H1 (cell line): ENCODE measurements at regions of chr2 and their contacts with region 1.

Region 1: DNA sequence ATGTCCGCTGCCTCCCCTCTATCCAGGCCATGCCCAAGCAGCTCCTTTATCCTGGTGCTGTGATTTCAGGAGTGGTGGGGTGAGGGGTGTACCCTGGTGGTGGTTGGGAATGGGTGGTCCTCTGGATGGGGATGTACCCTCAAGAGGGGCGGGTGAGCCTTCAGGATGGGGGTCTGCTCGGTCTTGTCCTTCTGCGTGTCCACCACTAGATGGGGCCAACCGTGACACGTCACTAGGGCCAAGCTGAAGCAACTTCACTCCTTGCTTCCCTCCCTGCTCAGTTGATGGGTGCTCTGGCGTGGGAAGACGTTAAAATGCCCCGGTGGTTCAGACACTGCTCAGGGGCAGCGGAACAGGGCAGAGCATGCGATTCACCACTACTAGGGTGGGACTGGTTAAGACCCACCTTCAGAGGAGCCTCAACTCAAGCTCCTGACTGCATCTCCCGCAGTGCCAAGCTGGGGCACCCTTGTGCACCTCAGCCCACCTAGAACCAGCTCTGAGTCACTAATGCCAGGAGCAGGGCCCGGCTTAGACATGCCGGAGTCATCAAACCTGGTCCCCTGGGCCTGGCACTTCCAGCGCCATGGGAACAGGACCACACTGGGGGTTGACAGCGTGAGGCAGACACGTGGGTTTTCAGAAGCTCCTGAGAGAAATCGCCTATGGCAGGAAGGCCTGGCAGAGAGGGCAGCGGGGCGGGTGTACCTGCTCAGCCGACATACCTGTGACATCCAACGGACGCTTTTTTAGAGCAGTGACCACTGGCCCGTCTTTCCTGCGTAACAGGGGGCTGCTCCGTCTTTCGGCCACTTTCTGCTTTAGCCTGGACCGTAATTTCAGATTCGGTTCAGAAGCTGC is 256.7 kb downstream of the HDAC4 start:
- DNase-seq: peak in 1 of 2 experiments; percentile 72
- H3K4me3 ChIP-seq: no peak overlapping the region
- H3K27ac ChIP-seq: no peak overlapping the region
- H3K4me1 ChIP-seq: no peaks in the 10 kb centered on the region
- H3K27me3 ChIP-seq: no peaks in the 10 kb centered on the region
- CTCF ChIP-seq: peak in 2 of 3 experiments; percentile 59 to 90; a peak in 3 of 4 replicates
- EP300 ChIP-seq: no peak
- POLR2A ChIP-seq: no peak
- RAD21 ChIP-seq: peak; percentile 61 to 64

Region 2: GRCh38 chr2:239015218-239015900 is 128.7 kb before region 1 on chr2:
- CTCF ChIA-PET with region 1: no interaction called
- POLR2A ChIA-PET with region 1: no interaction called
- DNase-seq: no peak
- H3K4me3 ChIP-seq: no peak overlapping the region
- H3K27ac ChIP-seq: no peak overlapping the region
- H3K4me1 ChIP-seq: no peaks in the 10 kb centered on the region
- H3K27me3 ChIP-seq: no peaks in the 10 kb centered on the region
- CTCF ChIP-seq: no peak
- EP300 ChIP-seq: no peak
- POLR2A ChIP-seq: no peak
- RAD21 ChIP-seq: no peak

Region 3: DNA sequence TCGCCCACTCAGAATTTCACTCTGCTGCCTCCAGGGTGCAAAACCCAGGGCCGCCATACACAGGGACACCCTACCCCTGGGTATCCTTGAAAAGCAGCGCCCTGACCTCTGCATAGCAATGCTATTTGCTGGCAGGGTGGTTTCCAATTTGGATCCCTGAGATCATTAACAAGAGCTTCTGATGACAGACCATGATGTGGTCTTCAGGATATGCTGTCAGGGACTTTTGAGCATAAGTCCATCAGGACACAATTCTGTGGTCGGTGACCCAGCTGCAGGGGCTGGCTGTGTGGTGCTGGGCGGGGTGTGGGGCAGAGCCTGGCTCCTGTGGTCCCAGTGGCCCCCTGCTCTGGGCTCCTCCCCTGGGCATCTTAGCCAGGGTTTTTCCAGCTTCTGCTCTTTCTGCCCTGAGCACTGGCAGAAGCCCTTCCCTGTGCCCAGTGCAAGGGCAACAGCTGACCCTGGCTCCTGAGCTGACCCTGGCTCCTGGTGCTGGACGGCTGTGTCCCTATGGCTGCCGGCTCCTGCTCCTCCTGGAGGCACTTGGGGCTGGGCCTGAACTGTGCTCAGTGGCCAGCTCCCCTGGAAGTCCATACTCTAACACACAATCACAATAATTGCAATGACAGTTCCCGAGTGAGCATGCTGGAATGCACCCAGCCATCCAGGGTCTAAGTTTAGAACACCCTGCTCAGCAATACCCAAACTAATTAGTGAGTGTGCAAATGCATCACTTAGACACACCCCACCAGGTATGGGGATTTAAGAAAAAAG is 14.8 kb before region 1 on chr2:
- CTCF ChIA-PET with region 1: interaction called, 30 read pairs
- POLR2A ChIA-PET with region 1: interaction called, 4 read pairs
- DNase-seq: no peak
- H3K4me3 ChIP-seq: no peak overlapping the region
- H3K27ac ChIP-seq: no peak overlapping the region
- H3K4me1 ChIP-seq: no peaks in the 10 kb centered on the region
- H3K27me3 ChIP-seq: no peaks in the 10 kb centered on the region
- CTCF ChIP-seq: no peak
- EP300 ChIP-seq: no peak
- POLR2A ChIP-seq: no peak
- RAD21 ChIP-seq: no peak

Region 4: GRCh38 chr2:239157771-239158170 is 13.7 kb after region 1 on chr2:
- CTCF ChIA-PET with region 1: interaction called, 28 read pairs
- POLR2A ChIA-PET with region 1: interaction called, 3 read pairs
- DNase-seq: peak in 1 of 2 experiments; percentile 82
- H3K4me3 ChIP-seq: no peak overlapping the region
- H3K27ac ChIP-seq: no peak overlapping the region
- H3K4me1 ChIP-seq: no peaks in the 10 kb centered on the region
- H3K27me3 ChIP-seq: no peaks in the 10 kb centered on the region
- CTCF ChIP-seq: no peak
- EP300 ChIP-seq: no peak
- POLR2A ChIP-seq: no peak
- RAD21 ChIP-seq: no peak

Region 5: DNA sequence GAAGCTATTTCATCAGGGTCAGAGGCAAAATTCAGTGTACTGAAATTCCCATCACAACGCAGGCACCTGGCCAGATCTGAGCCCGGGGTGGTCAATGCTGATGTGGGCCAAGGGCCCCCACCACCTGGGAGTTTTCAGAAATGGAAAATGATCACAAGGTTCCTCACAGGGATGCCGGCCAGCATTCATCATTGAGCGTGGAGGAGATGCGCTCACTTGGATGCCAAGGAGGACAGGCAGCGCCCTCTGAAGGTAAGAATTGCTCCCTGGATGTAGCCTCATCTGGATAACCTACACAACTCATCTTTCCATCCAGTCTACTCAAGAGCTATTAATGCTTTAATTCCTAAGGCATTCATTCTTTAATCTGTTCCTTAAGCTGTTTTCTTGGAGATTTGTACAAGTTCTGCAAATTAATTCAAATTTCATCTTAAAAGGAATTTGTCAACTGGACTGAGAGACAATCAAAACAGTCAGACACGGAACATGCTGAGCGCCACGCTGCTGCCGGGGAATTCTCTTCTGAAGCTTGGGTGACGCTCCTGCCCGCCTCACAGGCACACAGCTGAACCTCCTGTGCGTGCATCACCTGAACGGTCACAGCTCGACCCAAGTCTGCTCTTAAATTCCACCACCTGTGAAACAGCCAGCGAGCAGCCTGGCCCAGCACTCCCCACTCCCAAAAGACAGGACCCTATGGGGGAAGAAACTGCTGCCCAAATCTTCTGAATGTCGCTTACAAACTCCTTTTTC is 50.0 kb after region 1 on chr2:
- CTCF ChIA-PET with region 1: interaction called, 39 read pairs
- POLR2A ChIA-PET with region 1: no interaction called
- DNase-seq: peak in 1 of 2 experiments; percentile 55
- H3K4me3 ChIP-seq: no peak overlapping the region
- H3K27ac ChIP-seq: no peak overlapping the region
- H3K4me1 ChIP-seq: peaks cover 0 to 4% (median under 1%) of the 10 kb centered on the region in 4 experiments; a peak in 2 of 7 replicates
- H3K27me3 ChIP-seq: no peaks in the 10 kb centered on the region
- CTCF ChIP-seq: peak; percentile 49 to 74 (median 69)
- EP300 ChIP-seq: no peak
- POLR2A ChIP-seq: no peak
- RAD21 ChIP-seq: peak; percentile 53 to 60

Region 6: GRCh38 chr2:239269173-239269885 is 125.2 kb after region 1 on chr2:
- CTCF ChIA-PET with region 1: interaction called, 10 read pairs
- POLR2A ChIA-PET with region 1: no interaction called
- DNase-seq: no peak
- H3K4me3 ChIP-seq: no peak overlapping the region
- H3K27ac ChIP-seq: no peak overlapping the region
- H3K4me1 ChIP-seq: peaks cover 0 to 19% (median 11%) of the 10 kb centered on the region in 4 experiments; a peak in 5 of 7 replicates
- H3K27me3 ChIP-seq: no peaks in the 10 kb centered on the region
- CTCF ChIP-seq: peak in 2 of 3 experiments; percentile 9 to 20; a peak in 2 of 4 replicates
- EP300 ChIP-seq: no peak
- POLR2A ChIP-seq: no peak
- RAD21 ChIP-seq: peak; percentile 32 to 47; a peak in 3 of 4 replicates

Region 7: GRCh38 chr2:239308661-239309397 is 164.7 kb after region 1 on chr2:
- CTCF ChIA-PET with region 1: interaction called, 20 read pairs
- POLR2A ChIA-PET with region 1: no interaction called
- DNase-seq: peak in 1 of 2 experiments; percentile 43
- H3K4me3 ChIP-seq: no peak overlapping the region
- H3K27ac ChIP-seq: no peak overlapping the region
- H3K4me1 ChIP-seq: no peaks in the 10 kb centered on the region; a peak in 2 of 7 replicates
- H3K27me3 ChIP-seq: no peaks in the 10 kb centered on the region
- CTCF ChIP-seq: no peak
- EP300 ChIP-seq: no peak
- POLR2A ChIP-seq: no peak
- RAD21 ChIP-seq: no peak

Region 8: GRCh38 chr2:239433777-239434403 is 289.8 kb after region 1 on chr2:
- CTCF ChIA-PET with region 1: no interaction called
- POLR2A ChIA-PET with region 1: no interaction called
- DNase-seq: no peak
- H3K4me3 ChIP-seq: no peak overlapping the region
- H3K27ac ChIP-seq: no peak overlapping the region
- H3K4me1 ChIP-seq: no peaks in the 10 kb centered on the region
- H3K27me3 ChIP-seq: no peaks in the 10 kb centered on the region; a peak in 1 of 7 replicates
- CTCF ChIP-seq: no peak
- EP300 ChIP-seq: no peak
- POLR2A ChIP-seq: no peak
- RAD21 ChIP-seq: no peak